Right cardiac atrium (tissue), 5 donors: ENCODE measurements at regions of chr12 and their contacts with region 1.

Region 1: GRCh38 chr12:20798561-20798960 is 11.9 kb upstream of the SLCO1B3 start:
- DNase-seq: no peak
- ATAC-seq: peak; percentile 55 to 65
- H3K4me3 ChIP-seq: no peak overlapping the region
- H3K27ac ChIP-seq: no peak overlapping the region
- H3K4me1 ChIP-seq: no peaks in the 10 kb centered on the region
- H3K27me3 ChIP-seq: no peaks in the 10 kb centered on the region

Region 2: GRCh38 chr12:19744734-19745218 is 1053.8 kb before region 1 on chr12:
- intact Hi-C with region 1: loop called in 1 of 4 experiments (anchors 10 kb)
- DNase-seq: peak in 1 of 3 donors; percentile 33
- ATAC-seq: peak; percentile 87 to 94
- H3K4me3 ChIP-seq: no peak overlapping the region
- H3K27ac ChIP-seq: no peak overlapping the region
- H3K4me1 ChIP-seq: peaks cover 5% of the 10 kb centered on the region
- H3K27me3 ChIP-seq: no peaks in the 10 kb centered on the region